IMR-90 (cell line): ENCODE measurements at regions of chr1 and their contacts with region 1.

Region 1: GRCh38 chr1:85417017-85417416 is 47.9 kb downstream of the DDAH1 start:
- DNase-seq: no peak
- ATAC-seq: no peak
- H3K4me3 ChIP-seq: no peak overlapping the region
- H3K27ac ChIP-seq: no peak overlapping the region; the same call in 1 of the 2 replicates
- H3K4me1 ChIP-seq: peaks cover 4% of the 10 kb centered on the region; the same call in 1 of the 2 replicates
- H3K27me3 ChIP-seq: no peaks in the 10 kb centered on the region
- CTCF ChIP-seq: no peak
- POLR2A ChIP-seq: no peak
- RAD21 ChIP-seq: no peak

Region 2: GRCh38 chr1:85459290-85459689 is 42.3 kb after region 1 on chr1:
- CTCF ChIA-PET with region 1: interaction called, 3 read pairs
- POLR2A ChIA-PET with region 1: no interaction called
- dilution Hi-C with region 1: no loop called
- in situ Hi-C with region 1: no loop called
- intact Hi-C with region 1: loop called (anchors 5 kb)
- DNase-seq: no peak
- ATAC-seq: no peak
- H3K4me3 ChIP-seq: no peak overlapping the region
- H3K27ac ChIP-seq: no peak overlapping the region
- H3K4me1 ChIP-seq: peaks cover 6% of the 10 kb centered on the region
- H3K27me3 ChIP-seq: no peaks in the 10 kb centered on the region
- CTCF ChIP-seq: no peak
- POLR2A ChIP-seq: no peak
- RAD21 ChIP-seq: no peak